ENCODE measurements at regions of chr17 and their contacts with region 1.

Region 1: DNA sequence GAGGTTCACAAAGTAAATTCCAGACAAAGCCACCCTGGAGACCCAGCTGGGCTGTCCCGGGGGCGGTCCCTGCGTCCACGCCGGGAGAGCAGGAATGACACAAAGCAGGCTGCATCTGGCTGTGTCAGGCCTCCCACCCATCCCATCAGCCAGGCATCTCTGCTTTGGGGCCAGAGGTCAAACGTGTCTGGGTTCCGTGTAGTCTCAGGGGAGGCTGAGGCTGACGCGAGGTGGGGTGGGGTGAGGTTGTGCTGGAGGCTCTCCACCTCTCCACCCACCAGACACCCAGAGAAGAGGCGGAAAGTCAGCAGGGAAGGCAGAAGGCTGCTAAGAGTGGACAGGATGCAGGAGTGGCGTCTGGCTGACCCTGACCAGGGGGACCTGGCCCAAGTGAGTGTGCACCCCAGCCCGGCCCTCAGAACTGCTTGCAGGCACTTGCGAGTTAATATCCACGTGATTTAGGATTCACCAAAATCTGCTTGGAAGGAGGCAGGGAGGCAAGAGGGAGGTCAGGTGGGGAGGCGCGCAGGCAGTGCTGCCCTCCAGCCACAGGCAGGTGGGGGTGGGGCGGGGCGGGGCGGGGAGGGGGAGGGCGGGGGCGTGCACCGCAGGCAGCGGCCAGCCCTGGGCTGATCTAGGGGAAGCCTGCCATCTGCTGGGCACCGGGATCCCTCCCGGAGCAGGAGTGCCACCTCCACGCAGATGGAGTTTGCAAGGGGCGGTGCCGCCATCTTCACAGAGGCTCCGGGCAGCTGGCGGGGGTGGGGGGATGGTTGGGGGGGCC is 44.3 kb downstream of the TBC1D16 start:
- DNase-seq: peak; percentile 78 to 95 (median 89)

Region 2: GRCh38 chr17:79789534-79790353 is 201.6 kb before region 1 on chr17:
- intact Hi-C with region 1: loop called (anchors 5 kb)
- DNase-seq: peak in 29 of 42 donors; percentile 35 to 85 (median 61)

Region 3: GRCh38 chr17:80101946-80102663 is 110.8 kb after region 1 on chr17:
- intact Hi-C with region 1: no loop called
- DNase-seq: peak in 26 of 42 donors; percentile 3 to 59 (median 32)

Measured in head of caudate nucleus (tissue), 42 donors.